ENCODE measurements at regions of chr19 and their contacts with region 1.

Region 1: DNA sequence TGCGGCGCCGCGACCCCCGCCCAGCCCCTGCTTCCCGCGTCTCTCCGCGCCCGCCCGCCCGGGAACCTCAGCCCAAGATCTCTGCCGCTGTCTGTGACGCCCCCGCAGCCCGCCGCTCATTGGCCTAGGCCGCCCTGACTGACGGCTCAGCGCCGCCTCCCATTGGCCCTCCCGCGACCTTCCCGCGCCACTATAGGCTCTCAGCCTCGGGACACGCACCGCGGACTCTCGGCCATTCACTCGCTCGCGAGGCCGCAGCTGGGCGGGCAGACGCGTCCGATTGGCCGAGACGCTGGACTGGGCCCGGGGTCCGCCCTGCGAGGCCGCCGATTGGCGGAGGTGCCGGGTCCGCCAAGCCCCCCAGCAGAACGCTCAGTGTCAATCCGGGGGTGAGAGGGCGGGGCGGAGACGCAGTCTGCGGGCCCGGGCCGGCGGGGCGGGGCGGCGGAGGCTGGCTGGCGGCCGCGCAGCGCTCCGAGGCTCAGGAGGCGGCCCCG is at the start of gene PRKACA:
- DNase-seq: peak; percentile 99 to 100 (median 100)
- ATAC-seq: peak; percentile 92 to 94
- H3K4me3 ChIP-seq: peak within 1 kb of the TSS; percentile 95
- H3K27ac ChIP-seq: peak within 1 kb of the TSS; percentile 99
- H3K4me1 ChIP-seq: peaks cover 15% of the 10 kb centered on the region
- H3K27me3 ChIP-seq: no peaks in the 10 kb centered on the region
- total RNA-seq, gene PRKACA: 351 to 412 (median 373) TPM

Region 2: DNA sequence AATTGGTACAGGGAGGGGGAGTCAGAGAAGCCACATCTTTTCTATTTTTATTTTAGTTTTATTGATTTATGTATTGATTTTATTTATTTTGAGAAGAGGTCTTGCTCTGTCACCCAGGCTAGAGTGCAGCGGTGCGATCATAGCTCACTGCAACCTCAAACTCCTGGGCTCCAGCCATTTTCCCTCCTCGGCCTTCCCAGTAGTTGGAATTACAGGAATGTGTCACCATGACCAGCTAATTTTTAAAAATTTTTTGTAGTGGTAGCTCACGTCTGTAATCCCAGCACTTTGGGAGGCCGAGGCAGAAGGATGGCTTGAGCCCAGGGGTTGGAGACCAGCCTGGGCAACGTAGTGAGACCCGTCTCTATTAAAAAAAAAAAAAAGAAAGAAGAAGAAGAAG is 82.0 kb before region 1 on chr19:
- intact Hi-C with region 1: no loop called
- DNase-seq: peak in 1 of 3 donors; percentile 2
- ATAC-seq: no peak
- H3K4me3 ChIP-seq: no peak overlapping the region
- H3K27ac ChIP-seq: no peak overlapping the region
- H3K4me1 ChIP-seq: no peaks in the 10 kb centered on the region
- H3K27me3 ChIP-seq: no peaks in the 10 kb centered on the region

Region 3: GRCh38 chr19:14061756-14062562 is 55.8 kb before region 1 on chr19 and contains the start of gene PALM3:
- intact Hi-C with region 1: no loop called
- DNase-seq: no peak
- ATAC-seq: no peak
- H3K4me3 ChIP-seq: no peak within 1 kb of the TSS
- H3K27ac ChIP-seq: no peak within 1 kb of the TSS
- H3K4me1 ChIP-seq: no peaks in the 10 kb centered on the region
- H3K27me3 ChIP-seq: no peaks in the 10 kb centered on the region
- total RNA-seq, gene PALM3: 0.38 to 0.58 (median 0.48) TPM

Region 4: DNA sequence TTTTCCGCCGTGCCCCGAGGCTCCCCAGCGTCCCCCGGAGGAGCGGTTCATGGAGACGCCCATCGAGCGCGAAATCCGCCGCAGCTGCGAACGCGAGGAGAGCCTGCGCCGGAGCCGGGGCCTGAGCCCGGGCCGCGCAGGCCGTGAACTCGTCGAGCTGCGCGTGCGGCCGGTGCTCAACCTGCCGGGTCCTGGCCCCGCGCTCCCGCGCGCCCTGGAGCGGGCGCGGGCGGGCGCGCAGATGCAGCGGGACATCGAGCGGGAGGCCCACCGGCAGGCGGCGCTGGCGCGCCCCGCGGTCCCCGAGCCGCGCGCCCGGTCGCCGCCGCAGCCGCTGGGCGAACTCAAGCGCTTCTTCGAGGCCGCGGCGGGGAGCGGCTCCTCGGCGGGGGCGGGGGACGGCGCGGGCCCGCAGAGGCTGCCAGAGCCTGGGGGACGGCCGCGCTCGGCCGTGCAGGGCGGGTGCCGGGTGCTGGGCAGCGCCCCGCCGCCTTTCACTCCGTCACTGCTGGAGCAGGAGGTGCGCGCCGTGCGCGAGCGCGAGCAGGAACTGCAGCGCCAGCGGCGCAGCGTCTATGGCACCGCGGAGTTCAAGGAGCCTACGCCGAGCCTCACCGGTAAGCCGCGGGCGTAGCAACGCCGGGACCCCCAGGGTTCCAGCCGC is 44.3 kb before region 1 on chr19:
- intact Hi-C with region 1: loop called in 1 of 4 experiments (anchors 5 kb)
- DNase-seq: peak; percentile 79 to 92 (median 92)
- ATAC-seq: peak; percentile 55 to 58
- H3K4me3 ChIP-seq: peak overlapping the region; percentile 68
- H3K27ac ChIP-seq: peak overlapping the region; percentile 84
- H3K4me1 ChIP-seq: peaks cover 2% of the 10 kb centered on the region
- H3K27me3 ChIP-seq: no peaks in the 10 kb centered on the region

Region 5: DNA sequence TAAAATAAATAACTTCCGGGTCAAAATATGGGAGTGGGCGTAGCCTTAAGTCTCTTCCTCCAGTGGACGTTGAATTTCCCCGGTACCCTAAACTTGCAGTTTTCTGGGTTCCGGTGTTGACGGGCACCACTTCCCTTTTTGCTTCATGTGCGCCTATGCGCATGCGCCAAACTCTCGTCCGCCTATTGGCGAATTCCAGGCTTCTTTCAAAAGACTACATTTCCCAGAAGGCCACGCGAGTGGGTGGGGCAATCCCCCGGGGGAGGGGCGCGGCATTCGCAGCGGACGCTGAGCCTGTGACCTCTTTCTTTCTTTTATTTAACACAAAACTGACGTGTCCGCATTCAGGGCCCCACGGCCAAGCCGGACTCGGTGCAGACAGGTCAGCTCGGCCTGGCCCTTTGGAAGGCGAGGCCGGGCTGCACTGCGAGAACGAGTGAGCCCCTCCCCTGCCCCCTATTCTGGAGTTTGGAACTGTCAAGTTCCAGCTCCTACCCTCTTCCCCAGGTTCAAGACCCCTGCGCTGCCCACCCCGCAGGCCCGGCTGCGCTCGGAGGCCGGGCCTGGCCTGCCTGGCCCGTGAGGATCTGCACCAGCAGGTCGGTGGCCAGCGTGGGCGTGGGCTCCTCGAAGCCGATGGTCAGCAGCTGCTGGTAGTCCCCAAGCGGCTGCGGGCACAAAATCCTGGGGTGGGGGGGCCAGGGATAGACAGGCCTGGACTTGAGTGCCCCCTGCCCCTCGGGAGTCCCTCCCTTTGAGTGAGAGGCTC is 36.2 kb before region 1 on chr19:
- intact Hi-C with region 1: loop called in 1 of 4 experiments (anchors 5 kb)
- DNase-seq: peak; percentile 99
- ATAC-seq: peak; percentile 95
- H3K4me3 ChIP-seq: peak overlapping the region; percentile 90
- H3K27ac ChIP-seq: peak overlapping the region; percentile 96
- H3K4me1 ChIP-seq: peaks cover 4% of the 10 kb centered on the region
- H3K27me3 ChIP-seq: no peaks in the 10 kb centered on the region

Measured in right cardiac atrium (tissue), 5 donors.